ENCODE measurements at regions of chr17 and their contacts with region 1.

Region 1: GRCh38 chr17:37570527-37571093 is 38.6 kb downstream of the SYNRG start:
- DNase-seq: peak; percentile 76
- H3K4me3 ChIP-seq: no peak overlapping the region
- H3K27ac ChIP-seq: no peak overlapping the region
- H3K4me1 ChIP-seq: no peaks in the 10 kb centered on the region
- H3K27me3 ChIP-seq: no peaks in the 10 kb centered on the region

Region 2: DNA sequence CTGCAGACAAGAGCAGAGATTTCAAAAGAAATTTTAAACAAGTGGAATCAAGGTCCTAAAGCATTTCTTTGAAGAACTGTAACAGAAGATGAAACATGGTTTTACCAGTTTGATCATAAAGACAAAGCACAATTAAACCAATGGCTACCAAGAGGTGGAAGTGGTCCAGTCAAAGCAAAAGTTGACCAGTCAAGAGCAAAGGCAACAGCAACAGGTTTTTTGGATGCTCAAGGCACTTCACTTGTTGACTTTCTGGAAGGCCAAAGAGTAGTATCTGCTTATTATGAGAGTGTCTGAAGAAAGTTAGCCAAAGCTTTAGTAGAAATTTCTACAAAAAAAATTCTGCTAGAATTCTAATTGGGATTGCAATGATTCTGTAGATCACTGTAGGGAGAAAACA is 67.3 kb after region 1 on chr17:
- in situ Hi-C with region 1: loop called (anchors 10 kb)
- DNase-seq: no peak
- H3K4me3 ChIP-seq: no peak overlapping the region
- H3K27ac ChIP-seq: no peak overlapping the region
- H3K4me1 ChIP-seq: peaks cover 9% of the 10 kb centered on the region; the same call in 1 of the 2 replicates
- H3K27me3 ChIP-seq: no peaks in the 10 kb centered on the region